Naive thymus-derived CD4-positive, alpha-beta T cell (primary cell): ENCODE measurements at regions of chr17 and their contacts with region 1.

Region 1: DNA sequence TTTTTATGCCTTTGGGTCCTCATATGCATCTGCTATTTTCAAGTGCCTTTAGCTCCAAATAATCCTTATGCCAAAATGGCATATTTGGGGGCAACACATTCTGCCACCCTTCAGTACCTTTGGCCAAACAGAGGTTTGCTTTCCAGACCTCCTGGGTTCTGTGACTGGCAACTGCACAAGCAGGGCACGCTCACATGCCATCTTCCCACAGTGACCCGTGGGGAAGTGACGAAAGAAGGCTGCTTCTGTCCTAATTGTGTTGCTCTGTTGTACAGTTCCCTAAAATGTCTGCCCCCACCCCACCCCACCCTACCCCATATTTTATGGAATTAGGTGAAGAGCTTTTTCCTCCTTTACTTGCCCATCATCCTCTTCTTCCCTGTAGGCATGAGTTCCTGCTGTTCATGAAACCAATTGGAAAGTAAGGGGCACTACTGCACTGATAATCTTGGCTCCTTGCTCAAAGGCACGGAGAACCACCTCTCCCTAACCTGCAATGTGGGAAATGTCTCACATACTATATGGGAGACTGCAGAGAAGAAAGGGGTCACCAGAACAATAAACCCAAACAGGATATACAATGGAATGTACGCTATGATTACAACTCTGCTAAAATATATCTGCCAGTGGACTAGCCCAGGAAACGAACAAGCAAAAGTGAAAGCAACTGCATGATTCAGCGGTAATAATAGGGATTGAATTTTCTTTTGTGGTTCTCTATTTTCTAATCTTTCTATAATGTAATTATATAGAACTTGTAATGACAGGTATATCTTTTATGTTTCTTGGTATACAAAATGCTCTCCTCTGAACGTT is 3.3 kb upstream of the SLFN12L start:
- DNase-seq: peak; percentile 16 to 42 (median 36)
- ATAC-seq: peak; percentile 65
- H3K4me3 ChIP-seq: peak overlapping the region; percentile 64
- H3K4me3 Mint-ChIP-seq: peak overlapping the region; percentile 75 to 99 (median 87)
- H3K27ac ChIP-seq: peak overlapping the region; percentile 74
- H3K27ac Mint-ChIP-seq: peak overlapping the region; percentile 88 to 99 (median 95)
- H3K4me1 ChIP-seq: peaks cover 25 to 30% of the 10 kb centered on the region in 2 donors
- H3K4me1 Mint-ChIP-seq: peaks cover 32 to 64% (median 55%) of the 10 kb centered on the region in 7 donors
- H3K27me3 ChIP-seq: no peaks in the 10 kb centered on the region
- H3K27me3 Mint-ChIP-seq: no peaks in the 10 kb centered on the region

Region 2: DNA sequence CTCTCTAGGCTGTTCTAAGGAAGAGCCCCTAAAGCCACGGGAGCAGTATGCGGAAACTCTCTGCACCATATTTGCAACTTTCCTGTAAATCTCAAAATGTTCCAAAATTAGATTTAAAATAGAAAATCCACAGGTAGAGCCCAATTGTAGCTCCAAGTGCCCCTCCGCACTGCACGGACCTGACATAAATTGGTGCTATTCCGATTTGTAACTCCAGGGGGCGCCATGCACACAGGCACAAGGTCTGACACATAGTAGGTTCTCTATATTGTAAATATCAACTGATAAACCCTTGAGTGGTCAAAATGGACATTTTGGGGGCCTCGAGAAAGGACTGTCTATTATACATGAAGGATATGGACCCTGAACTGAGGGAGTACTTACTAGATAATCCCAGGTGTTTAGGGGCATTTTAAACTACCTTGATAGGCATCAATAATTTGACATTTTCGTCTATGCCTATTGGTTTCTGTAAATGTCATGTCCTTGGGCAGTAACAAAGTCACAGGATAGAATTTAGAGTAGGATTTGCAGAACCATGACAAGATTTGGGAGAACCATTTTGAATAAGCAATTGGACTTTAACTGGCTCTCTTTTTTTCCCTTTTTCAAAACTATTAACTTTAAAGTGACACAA is 998.0 kb before region 1 on chr17:
- CTCF ChIA-PET with region 1: no interaction called
- POLR2A ChIA-PET with region 1: no interaction called
- intact Hi-C with region 1: loop called in 1 of 2 experiments (anchors 5 kb)
- DNase-seq: peak; percentile 18 to 58 (median 35)
- ATAC-seq: peak; percentile 62
- H3K4me3 ChIP-seq: no peak overlapping the region
- H3K4me3 Mint-ChIP-seq: no peak overlapping the region
- H3K27ac ChIP-seq: no peak overlapping the region
- H3K27ac Mint-ChIP-seq: no peak overlapping the region
- H3K4me1 ChIP-seq: no peaks in the 10 kb centered on the region
- H3K4me1 Mint-ChIP-seq: no peaks in the 10 kb centered on the region
- H3K27me3 ChIP-seq: no peaks in the 10 kb centered on the region
- H3K27me3 Mint-ChIP-seq: peaks cover 21 to 34% (median 30%) of the 10 kb centered on the region in 5 donors

Region 3: GRCh38 chr17:34892461-34893249 is 648.1 kb before region 1 on chr17:
- CTCF ChIA-PET with region 1: no interaction called
- POLR2A ChIA-PET with region 1: no interaction called
- intact Hi-C with region 1: no loop called
- DNase-seq: peak in 6 of 9 donors; percentile 10 to 38 (median 30)
- ATAC-seq: no peak
- H3K4me3 ChIP-seq: no peak overlapping the region
- H3K4me3 Mint-ChIP-seq: no peak overlapping the region
- H3K27ac ChIP-seq: no peak overlapping the region
- H3K27ac Mint-ChIP-seq: no peak overlapping the region
- H3K4me1 ChIP-seq: no peaks in the 10 kb centered on the region
- H3K4me1 Mint-ChIP-seq: peaks cover 0 to 2% (median 0%) of the 10 kb centered on the region in 7 donors
- H3K27me3 ChIP-seq: no peaks in the 10 kb centered on the region
- H3K27me3 Mint-ChIP-seq: peaks cover 20 to 53% (median 24%) of the 10 kb centered on the region in 5 donors

Region 4: DNA sequence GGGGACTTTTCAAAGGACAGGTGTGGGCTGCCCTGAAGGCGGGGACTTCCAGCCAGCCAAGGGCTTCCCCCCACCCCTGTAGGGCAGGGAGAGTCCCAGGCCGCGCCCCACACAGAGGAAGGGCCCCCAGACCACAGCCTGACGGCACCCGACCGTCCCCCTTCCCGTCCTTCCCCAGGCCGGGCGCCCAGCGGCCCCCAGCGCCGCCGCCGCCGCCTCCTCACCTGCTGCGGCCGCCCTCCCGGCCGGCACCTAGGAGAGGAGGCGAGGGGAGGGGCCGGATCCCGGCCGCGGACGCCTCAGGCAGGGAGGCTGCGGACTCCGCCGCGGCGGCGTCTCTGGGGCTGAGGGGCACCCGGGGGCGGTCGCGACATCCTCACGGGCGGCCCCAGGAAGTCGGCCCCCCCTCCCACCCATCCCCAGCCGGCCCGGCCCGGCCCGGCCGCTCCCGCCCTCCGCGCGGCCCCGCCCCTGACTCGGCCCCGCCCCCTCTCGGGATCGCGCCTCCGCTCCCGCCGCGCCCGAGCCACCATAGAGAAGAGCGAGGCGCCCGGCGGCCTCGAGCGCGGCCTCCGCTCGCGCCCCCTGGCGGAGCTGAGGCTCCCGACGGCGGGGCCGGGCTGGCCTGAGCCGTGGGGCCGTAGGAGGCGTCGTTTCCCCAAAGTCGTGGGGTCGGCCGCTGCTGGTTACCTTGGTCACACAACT is 451.8 kb before region 1 on chr17:
- CTCF ChIA-PET with region 1: interaction called, 3 read pairs
- POLR2A ChIA-PET with region 1: interaction called, 3 read pairs
- intact Hi-C with region 1: loop called in 1 of 2 experiments (anchors 1 kb)
- DNase-seq: peak; percentile 77 to 95 (median 89)
- ATAC-seq: peak; percentile 94
- H3K4me3 ChIP-seq: peak overlapping the region; percentile 93
- H3K4me3 Mint-ChIP-seq: peak overlapping the region; percentile 93 to 98 (median 94)
- H3K27ac ChIP-seq: peak overlapping the region; percentile 89
- H3K27ac Mint-ChIP-seq: peak overlapping the region; percentile 89 to 97 (median 94)
- H3K4me1 ChIP-seq: peaks cover 13 to 27% of the 10 kb centered on the region in 2 donors
- H3K4me1 Mint-ChIP-seq: peaks cover 21 to 52% (median 44%) of the 10 kb centered on the region in 7 donors
- H3K27me3 ChIP-seq: no peaks in the 10 kb centered on the region
- H3K27me3 Mint-ChIP-seq: no peaks in the 10 kb centered on the region

Region 5: GRCh38 chr17:35214631-35215273 is 326.0 kb before region 1 on chr17:
- CTCF ChIA-PET with region 1: interaction called, 4 read pairs
- POLR2A ChIA-PET with region 1: interaction called, 23 read pairs
- intact Hi-C with region 1: loop called (anchors 1 kb)
- DNase-seq: peak in 6 of 9 donors; percentile 44 to 64 (median 54)
- ATAC-seq: peak; percentile 36
- H3K4me3 ChIP-seq: peak overlapping the region; percentile 47
- H3K4me3 Mint-ChIP-seq: peak overlapping the region; percentile 69 to 91 (median 84)
- H3K27ac ChIP-seq: peak overlapping the region; percentile 76
- H3K27ac Mint-ChIP-seq: peak overlapping the region; percentile 90 to 99 (median 98)
- H3K4me1 ChIP-seq: peaks cover 75 to 85% of the 10 kb centered on the region in 2 donors
- H3K4me1 Mint-ChIP-seq: peaks cover 69 to 92% (median 87%) of the 10 kb centered on the region in 7 donors
- H3K27me3 ChIP-seq: no peaks in the 10 kb centered on the region
- H3K27me3 Mint-ChIP-seq: no peaks in the 10 kb centered on the region

Region 6: GRCh38 chr17:35432176-35433074 is 108.4 kb before region 1 on chr17 and contains the start of gene SLFN12:
- CTCF ChIA-PET with region 1: interaction called, 3 read pairs
- POLR2A ChIA-PET with region 1: interaction called, 3 read pairs
- intact Hi-C with region 1: loop called (anchors 1 to 5 kb)
- DNase-seq: peak in 8 of 9 donors; percentile 31 to 75 (median 70)
- ATAC-seq: peak; percentile 95
- H3K4me3 ChIP-seq: peak within 1 kb of the TSS; percentile 70
- H3K4me3 Mint-ChIP-seq: peak within 1 kb of the TSS; percentile 86 to 100 (median 96)
- H3K27ac ChIP-seq: peak within 1 kb of the TSS; percentile 63
- H3K27ac Mint-ChIP-seq: peak within 1 kb of the TSS; percentile 82 to 94 (median 91)
- H3K4me1 ChIP-seq: peaks cover 16 to 28% of the 10 kb centered on the region in 2 donors
- H3K4me1 Mint-ChIP-seq: peaks cover 36 to 65% (median 59%) of the 10 kb centered on the region in 7 donors
- H3K27me3 ChIP-seq: no peaks in the 10 kb centered on the region
- H3K27me3 Mint-ChIP-seq: no peaks in the 10 kb centered on the region
- total RNA-seq, gene SLFN12: 4.2 to 14.9 (median 6.5) TPM

Region 7: GRCh38 chr17:35519439-35519838 is 21.4 kb before region 1 on chr17:
- CTCF ChIA-PET with region 1: interaction called, 9 read pairs
- POLR2A ChIA-PET with region 1: interaction called, 14 read pairs
- intact Hi-C with region 1: loop called in 1 of 2 experiments (anchors 2 kb)
- DNase-seq: no peak
- ATAC-seq: no peak
- H3K4me3 ChIP-seq: peak overlapping the region; percentile 25
- H3K4me3 Mint-ChIP-seq: peak overlapping the region in 9 of 10 donors; percentile 6 to 82 (median 57)
- H3K27ac ChIP-seq: no peak overlapping the region
- H3K27ac Mint-ChIP-seq: peak overlapping the region in 5 of 9 donors; percentile 49 to 80 (median 74)
- H3K4me1 ChIP-seq: peaks cover 41 to 86% of the 10 kb centered on the region in 2 donors
- H3K4me1 Mint-ChIP-seq: peaks cover 59 to 98% (median 93%) of the 10 kb centered on the region in 7 donors
- H3K27me3 ChIP-seq: no peaks in the 10 kb centered on the region
- H3K27me3 Mint-ChIP-seq: peaks cover 0 to 4% (median 0%) of the 10 kb centered on the region in 5 donors

Region 8: DNA sequence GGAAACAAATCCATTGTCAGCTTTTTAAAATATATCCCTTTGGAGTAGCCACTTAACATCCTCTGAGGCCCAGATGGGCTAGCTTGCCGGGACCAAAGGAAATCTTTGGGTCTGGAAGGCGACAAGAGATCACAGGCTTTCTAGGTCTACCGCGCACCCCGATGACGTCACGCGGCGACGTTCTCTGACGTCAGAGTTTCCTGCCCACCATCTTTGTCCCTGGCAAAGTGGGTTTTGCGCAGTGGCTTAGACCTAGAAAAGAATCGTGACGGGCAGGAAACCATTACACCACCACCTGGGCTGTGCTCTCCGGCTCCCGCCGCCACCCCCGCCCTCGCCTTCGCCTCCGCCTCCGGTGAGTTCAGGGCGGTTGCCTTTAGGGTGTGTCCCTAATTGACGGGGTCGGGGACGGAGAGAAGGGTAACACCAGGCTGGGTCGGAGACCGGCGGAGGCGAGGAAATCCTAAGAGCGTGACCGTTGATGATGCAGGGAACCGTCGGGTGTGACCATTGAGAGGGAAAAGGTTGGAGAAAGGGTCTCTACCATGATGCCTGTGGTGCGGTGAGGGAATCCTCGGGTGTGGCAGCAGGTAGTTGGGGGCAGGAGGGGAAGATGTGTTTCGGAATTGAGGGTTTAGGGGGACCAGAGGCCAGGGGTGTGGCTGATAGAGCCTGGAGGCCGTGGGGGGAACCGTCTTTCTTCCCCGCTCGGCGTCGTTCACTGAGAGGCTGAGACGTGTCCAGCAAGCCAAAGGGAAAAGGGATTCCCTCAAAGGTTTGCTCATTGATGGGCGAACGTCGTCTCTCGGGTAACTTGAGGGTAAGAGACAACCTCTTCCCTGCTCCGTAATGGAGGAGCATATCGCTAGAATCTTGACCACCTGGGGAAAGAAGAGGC is 46.5 kb after region 1 on chr17 and contains the start of gene AP2B1:
- CTCF ChIA-PET with region 1: no interaction called
- POLR2A ChIA-PET with region 1: interaction called, 7 read pairs
- intact Hi-C with region 1: loop called (anchors 1 kb)
- DNase-seq: peak; percentile 96 to 100 (median 98)
- ATAC-seq: peak; percentile 99
- H3K4me3 ChIP-seq: peak within 1 kb of the TSS; percentile 85
- H3K4me3 Mint-ChIP-seq: peak within 1 kb of the TSS; percentile 92 to 99 (median 97)
- H3K27ac ChIP-seq: peak within 1 kb of the TSS; percentile 91
- H3K27ac Mint-ChIP-seq: peak within 1 kb of the TSS; percentile 95 to 99 (median 99)
- H3K4me1 ChIP-seq: peaks cover 13 to 17% of the 10 kb centered on the region in 2 donors
- H3K4me1 Mint-ChIP-seq: peaks cover 28 to 45% (median 38%) of the 10 kb centered on the region in 7 donors
- H3K27me3 ChIP-seq: no peaks in the 10 kb centered on the region
- H3K27me3 Mint-ChIP-seq: peaks cover 0 to 12% (median 0%) of the 10 kb centered on the region in 5 donors
- total RNA-seq, gene AP2B1: 84.7 to 197 (median 136) TPM

Region 9: GRCh38 chr17:35612924-35613521 is 72.2 kb after region 1 on chr17:
- CTCF ChIA-PET with region 1: no interaction called
- POLR2A ChIA-PET with region 1: no interaction called
- intact Hi-C with region 1: no loop called
- DNase-seq: peak in 6 of 9 donors; percentile 21 to 50 (median 31)
- ATAC-seq: peak; percentile 67
- H3K4me3 ChIP-seq: no peak overlapping the region
- H3K4me3 Mint-ChIP-seq: no peak overlapping the region
- H3K27ac ChIP-seq: no peak overlapping the region
- H3K27ac Mint-ChIP-seq: no peak overlapping the region
- H3K4me1 ChIP-seq: no peaks in the 10 kb centered on the region
- H3K4me1 Mint-ChIP-seq: peaks cover 0 to 9% (median 5%) of the 10 kb centered on the region in 7 donors
- H3K27me3 ChIP-seq: no peaks in the 10 kb centered on the region
- H3K27me3 Mint-ChIP-seq: no peaks in the 10 kb centered on the region